A549 (cell line): ENCODE measurements at regions of chr16 and their contacts with region 1.

Region 1: DNA sequence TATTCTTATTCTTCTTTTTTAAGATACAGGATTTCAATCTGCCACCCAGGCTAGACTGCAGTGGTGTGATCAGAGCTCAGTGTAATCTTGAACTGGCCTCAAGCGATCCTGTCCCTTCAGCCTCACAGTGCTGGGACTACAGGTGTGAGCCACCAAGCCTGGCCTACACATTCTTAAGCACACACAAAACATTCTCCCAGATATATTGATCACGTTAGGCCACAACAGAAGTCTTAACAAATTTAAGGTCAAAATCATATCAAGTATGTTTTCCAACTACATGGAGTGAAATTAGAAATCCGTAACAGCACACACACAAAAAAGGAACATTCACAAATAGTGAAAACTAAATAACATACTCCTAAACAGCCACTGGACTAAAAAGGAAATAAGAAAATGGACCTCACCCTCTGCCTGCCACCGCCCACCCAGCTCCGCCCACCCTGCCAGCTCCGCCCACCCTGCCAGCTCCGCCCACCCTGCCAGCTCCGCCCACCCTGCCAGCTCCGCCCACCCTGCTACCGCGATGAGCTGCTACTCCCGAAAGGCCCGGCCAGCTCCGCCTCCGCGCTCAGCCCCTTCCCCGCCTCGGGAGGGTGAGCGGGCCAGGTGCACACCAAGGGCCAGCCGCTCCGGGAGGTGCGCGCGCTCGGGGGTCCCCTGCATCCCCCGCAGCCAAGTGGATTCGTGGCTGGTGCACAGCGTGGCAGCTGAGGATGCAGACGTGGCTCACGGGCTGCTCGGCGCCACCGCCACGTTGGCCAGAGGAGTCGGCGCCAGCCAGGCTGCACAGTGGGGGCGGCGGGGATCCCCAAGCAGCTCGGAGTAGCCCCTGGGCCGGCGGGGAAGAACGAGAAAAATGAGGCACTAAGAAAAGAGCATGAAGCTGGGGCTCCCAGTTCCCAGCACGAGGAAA is 41.2 kb downstream of the C16orf87 start:
- DNase-seq: peak; percentile 54 to 61
- ATAC-seq: peak; percentile 98
- H3K4me3 ChIP-seq: peak overlapping the region; percentile 66
- H3K27ac ChIP-seq: peak overlapping the region; percentile 71 to 89
- H3K4me1 ChIP-seq: 0 out of 3 replicates have a peak, but pooled peaks cover 3% of the 10 kb centered on the region
- CTCF ChIP-seq: no peak
- EP300 ChIP-seq: no peak
- POLR2A ChIP-seq: peak; percentile 78
- RAD21 ChIP-seq: no peak

Region 2: GRCh38 chr16:46801428-46802049 is 11.8 kb after region 1 on chr16:
- CTCF ChIA-PET with region 1: interaction called, 7 read pairs
- POLR2A ChIA-PET with region 1: interaction called, 13 read pairs
- DNase-seq: peak; percentile 37 to 38
- ATAC-seq: peak; percentile 72 to 73; a peak in 5 of 6 replicates
- H3K4me3 ChIP-seq: no peak overlapping the region
- H3K27ac ChIP-seq: no peak overlapping the region
- H3K4me1 ChIP-seq: no peaks in the 10 kb centered on the region
- CTCF ChIP-seq: peak; percentile 55; the same call in 2 of the 3 replicates
- EP300 ChIP-seq: no peak
- POLR2A ChIP-seq: no peak
- RAD21 ChIP-seq: peak; percentile 41 to 43; a peak in 4 of 5 replicates